Activated naive CD4-positive, alpha-beta T cell treated with anti-CD3 and anti-CD28 coated beads for 36 hours (primary cell): ENCODE measurements at regions of chr11 and their contacts with region 1.

Region 1: DNA sequence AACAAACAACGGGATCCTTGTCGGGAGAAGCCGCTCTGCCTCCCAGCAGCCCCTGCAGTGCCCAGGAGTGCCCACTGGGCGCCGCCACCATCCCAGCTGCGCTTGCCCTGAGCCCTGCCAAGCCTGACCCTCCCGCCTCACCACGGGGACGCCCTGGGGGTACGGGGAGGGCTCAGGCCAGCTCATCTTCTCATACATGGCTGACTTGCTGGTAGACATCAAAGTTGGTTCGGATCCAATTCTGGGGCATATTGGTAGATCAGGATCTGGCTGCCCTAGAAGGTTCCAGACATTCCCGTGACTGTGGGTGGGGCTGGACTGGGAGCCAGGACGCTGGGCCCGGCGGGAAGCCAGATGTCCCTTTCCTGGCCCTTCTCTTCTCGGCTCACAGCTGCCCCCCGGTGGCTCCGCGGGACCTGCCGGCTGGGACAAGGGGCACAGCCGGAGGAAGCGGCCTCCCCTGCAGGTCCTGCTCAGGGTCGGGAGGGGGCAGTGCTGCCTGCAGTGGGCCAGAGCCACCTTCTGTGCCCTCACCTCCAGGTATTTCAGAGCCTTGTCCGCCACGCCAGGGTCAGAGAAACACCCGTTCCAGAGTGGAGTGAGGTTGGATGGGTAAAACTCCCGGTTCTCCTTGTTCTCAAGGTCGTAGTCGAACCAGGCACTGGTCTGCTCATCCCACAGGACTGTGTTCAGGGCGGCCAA is 10.6 kb upstream of the TREH start:
- DNase-seq: peak; percentile 96
- H3K4me3 Mint-ChIP-seq: peak overlapping the region; percentile 77
- H3K27ac Mint-ChIP-seq: peak overlapping the region; percentile 82
- H3K4me1 Mint-ChIP-seq: peaks cover 46% of the 10 kb centered on the region
- H3K27me3 Mint-ChIP-seq: no peaks in the 10 kb centered on the region

Region 2: DNA sequence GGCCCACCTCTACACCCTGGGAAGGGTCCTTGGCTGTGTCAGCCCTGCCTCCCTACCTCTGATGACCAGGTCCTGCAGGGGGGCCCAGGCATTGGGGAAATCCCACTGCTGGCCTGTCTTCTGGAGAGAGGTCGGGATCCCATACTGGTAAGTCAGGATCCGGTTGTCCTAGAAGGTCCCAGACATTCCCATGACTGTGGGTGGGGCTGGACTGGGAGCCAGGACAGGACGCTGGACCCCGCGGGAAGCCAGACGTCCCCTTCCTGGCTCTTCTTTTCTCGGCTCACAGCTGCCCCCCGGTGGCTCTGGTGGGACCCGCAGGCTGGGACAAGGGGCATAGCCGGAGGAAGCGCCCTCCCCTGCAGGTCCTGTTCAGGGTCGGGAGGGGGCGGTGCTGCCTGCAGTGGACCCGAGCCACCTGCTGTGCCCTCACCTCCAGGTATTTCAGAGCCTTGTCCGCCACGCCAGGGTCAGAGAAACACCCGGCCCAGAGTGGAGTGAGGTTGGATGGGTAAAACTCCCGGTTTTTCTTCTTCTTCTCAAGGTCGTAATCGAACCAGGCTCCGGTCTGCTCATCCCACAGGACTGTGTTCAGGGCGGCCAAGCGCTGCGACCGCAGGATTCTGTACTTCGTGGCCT is 30.6 kb before region 1 on chr11:
- CTCF ChIA-PET with region 1: interaction called, 15 read pairs
- intact Hi-C with region 1: no loop called
- DNase-seq: peak; percentile 96
- H3K4me3 Mint-ChIP-seq: no peak overlapping the region
- H3K27ac Mint-ChIP-seq: no peak overlapping the region
- H3K4me1 Mint-ChIP-seq: peaks cover 5% of the 10 kb centered on the region
- H3K27me3 Mint-ChIP-seq: no peaks in the 10 kb centered on the region

Region 3: DNA sequence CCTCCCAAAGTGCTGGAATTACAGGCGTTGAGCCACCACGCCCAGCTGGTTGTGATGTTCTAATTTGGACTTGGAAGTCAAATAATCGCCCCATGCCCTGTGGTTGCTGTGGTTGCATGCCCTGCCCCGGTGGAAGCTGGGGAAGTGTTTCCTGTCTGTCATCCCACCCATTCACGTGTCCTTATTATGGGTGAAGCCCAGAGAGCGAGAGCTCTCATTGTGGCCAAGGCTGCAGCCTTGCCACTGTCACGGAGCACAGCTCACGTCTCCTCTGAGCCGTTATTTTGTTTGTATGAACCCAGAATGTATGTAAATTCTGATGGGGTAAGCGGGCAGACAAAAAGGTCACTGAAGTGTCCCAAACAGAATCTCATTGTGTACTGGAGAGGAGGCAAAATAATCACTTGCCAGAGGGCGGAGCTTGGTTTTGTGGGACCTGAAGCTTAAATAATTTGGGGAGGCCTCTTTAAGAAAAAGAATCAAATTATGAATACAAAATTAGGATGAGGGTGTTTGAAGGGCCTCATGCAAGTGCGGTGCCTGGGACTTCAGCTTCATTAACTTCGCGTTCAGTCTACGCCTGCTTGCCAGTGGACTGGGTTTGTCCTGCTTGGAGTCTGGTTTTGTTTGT is 15.2 kb after region 1 on chr11:
- CTCF ChIA-PET with region 1: interaction called, 11 read pairs
- intact Hi-C with region 1: loop called (anchors 1 kb)
- DNase-seq: peak; percentile 69
- H3K4me3 Mint-ChIP-seq: peak overlapping the region; percentile 3
- H3K27ac Mint-ChIP-seq: peak overlapping the region; percentile 0
- H3K4me1 Mint-ChIP-seq: peaks cover 30% of the 10 kb centered on the region
- H3K27me3 Mint-ChIP-seq: no peaks in the 10 kb centered on the region

Region 4: DNA sequence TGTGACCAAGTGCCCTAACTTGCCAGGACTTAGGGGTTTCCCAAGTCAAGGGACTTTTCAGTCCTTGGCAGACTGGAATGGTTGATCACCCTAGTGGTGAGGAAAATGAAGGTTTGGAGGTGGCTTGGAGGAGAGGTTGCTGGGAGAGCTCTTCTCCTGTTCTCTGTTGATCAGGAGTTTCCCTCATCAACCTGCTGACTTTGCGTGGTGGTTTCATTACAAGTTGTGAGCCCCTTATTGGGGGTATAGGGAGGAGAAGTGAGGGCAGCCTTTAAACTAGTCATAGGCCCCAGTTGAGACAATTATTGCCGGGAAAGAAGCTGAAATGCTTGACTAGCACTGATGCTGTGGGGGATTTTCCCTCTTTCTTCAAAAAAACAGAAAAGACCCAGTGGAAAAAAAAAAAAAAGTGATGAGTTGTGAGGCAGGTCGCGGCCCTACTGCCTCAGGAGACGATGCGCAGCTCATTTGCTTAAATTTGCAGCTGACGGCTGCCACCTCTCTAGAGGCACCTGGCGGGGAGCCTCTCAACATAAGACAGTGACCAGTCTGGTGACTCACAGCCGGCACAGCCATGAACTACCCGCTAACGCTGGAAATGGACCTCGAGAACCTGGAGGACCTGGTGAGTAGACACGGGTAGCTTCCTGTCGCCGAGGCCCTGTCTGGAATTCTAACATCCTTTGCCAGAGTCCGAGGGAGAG is 193.5 kb after region 1 on chr11 and contains the start of gene CXCR5:
- CTCF ChIA-PET with region 1: interaction called, 7 read pairs
- intact Hi-C with region 1: loop called (anchors 1 kb)
- DNase-seq: peak; percentile 87
- H3K4me3 Mint-ChIP-seq: peak within 1 kb of the TSS; percentile 83
- H3K27ac Mint-ChIP-seq: peak within 1 kb of the TSS; percentile 99
- H3K4me1 Mint-ChIP-seq: peaks cover 84% of the 10 kb centered on the region
- H3K27me3 Mint-ChIP-seq: no peaks in the 10 kb centered on the region
- total RNA-seq, gene CXCR5: 25.6 to 26.1 TPM

Region 5: DNA sequence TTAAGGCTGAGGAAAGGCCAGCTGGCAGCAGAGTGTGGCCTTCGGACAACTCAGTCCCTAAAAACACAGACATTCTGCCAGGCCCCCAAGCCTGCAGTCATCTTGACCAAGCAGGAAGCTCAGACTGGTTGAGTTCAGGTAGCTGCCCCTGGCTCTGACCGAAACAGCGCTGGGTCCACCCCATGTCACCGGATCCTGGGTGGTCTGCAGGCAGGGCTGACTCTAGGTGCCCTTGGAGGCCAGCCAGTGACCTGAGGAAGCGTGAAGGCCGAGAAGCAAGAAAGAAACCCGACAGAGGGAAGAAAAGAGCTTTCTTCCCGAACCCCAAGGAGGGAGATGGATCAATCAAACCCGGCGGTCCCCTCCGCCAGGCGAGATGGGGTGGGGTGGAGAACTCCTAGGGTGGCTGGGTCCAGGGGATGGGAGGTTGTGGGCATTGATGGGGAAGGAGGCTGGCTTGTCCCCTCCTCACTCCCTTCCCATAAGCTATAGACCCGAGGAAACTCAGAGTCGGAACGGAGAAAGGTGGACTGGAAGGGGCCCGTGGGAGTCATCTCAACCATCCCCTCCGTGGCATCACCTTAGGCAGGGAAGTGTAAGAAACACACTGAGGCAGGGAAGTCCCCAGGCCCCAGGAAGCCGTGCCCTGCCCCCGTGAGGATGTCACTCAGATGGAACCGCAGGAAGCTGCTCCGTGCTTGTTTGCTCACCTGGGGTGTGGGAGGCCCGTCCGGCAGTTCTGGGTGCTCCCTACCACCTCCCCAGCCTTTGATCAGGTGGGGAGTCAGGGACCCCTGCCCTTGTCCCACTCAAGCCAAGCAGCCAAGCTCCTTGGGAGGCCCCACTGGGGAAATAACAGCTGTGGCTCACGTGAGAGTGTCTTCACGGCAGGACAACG is 205.4 kb after region 1 on chr11:
- CTCF ChIA-PET with region 1: interaction called, 14 read pairs
- intact Hi-C with region 1: loop called (anchors 1 kb)
- DNase-seq: peak; percentile 95
- H3K4me3 Mint-ChIP-seq: peak overlapping the region; percentile 72
- H3K27ac Mint-ChIP-seq: peak overlapping the region; percentile 97
- H3K4me1 Mint-ChIP-seq: peaks cover 78% of the 10 kb centered on the region
- H3K27me3 Mint-ChIP-seq: no peaks in the 10 kb centered on the region

Region 6: GRCh38 chr11:118956094-118956846 is 266.3 kb after region 1 on chr11 and contains the start of gene UPK2:
- CTCF ChIA-PET with region 1: interaction called, 49 read pairs
- intact Hi-C with region 1: loop called (anchors 1 kb)
- DNase-seq: peak; percentile 95
- H3K4me3 Mint-ChIP-seq: no peak within 1 kb of the TSS
- H3K27ac Mint-ChIP-seq: no peak within 1 kb of the TSS
- H3K4me1 Mint-ChIP-seq: peaks cover 5% of the 10 kb centered on the region
- H3K27me3 Mint-ChIP-seq: no peaks in the 10 kb centered on the region
- total RNA-seq, gene UPK2: 0.25 to 0.45 TPM